Calu3 (cell line): ENCODE measurements at regions of chr5 and their contacts with region 1.

Region 1: DNA sequence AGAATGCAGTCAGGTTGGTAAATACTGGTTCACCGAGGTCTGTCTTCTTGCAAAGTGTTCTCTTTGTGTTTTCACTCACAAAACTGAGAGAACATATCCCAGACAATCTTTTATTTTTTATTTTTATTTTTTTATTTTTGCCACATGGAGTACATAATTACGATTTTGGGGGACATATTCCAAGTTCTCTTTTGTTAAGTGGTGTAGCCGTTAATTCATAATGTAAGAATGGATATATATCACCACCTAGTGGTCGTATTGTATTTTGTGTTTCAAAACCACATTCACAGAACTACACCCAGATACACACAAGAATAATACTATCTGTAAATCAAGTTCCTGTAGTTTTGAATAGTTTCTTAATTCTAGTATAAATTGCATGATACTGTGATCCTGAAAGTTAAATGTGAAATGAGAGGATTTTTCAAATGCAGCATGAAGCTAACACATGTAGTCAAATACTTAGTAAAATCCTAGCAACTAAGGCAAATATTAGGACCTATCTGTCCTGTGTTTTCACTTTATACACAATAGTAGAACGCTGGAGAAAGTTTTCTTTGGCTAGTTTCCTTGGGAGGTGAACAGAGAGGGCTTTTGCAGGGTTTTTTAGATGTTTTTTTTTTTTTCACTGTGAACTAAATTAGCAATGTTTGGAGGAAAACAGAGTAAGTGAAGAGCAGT is 92.7 kb downstream of the VCAN start:
- DNase-seq: no peak
- H3K4me3 Mint-ChIP-seq: peak overlapping the region; percentile 33
- H3K27ac Mint-ChIP-seq: peak overlapping the region; percentile 84
- H3K4me1 Mint-ChIP-seq: peaks cover 70% of the 10 kb centered on the region
- H3K27me3 Mint-ChIP-seq: no peaks in the 10 kb centered on the region
- CTCF ChIP-seq: peak; percentile 44

Region 2: GRCh38 chr5:82351754-82352145 is 1212.5 kb before region 1 on chr5:
- CTCF ChIA-PET with region 1: no interaction called
- intact Hi-C with region 1: loop called (anchors 5 kb)
- DNase-seq: peak; percentile 29
- H3K4me3 Mint-ChIP-seq: no peak overlapping the region
- H3K27ac Mint-ChIP-seq: peak overlapping the region; percentile 8
- H3K4me1 Mint-ChIP-seq: peaks cover 22% of the 10 kb centered on the region
- H3K27me3 Mint-ChIP-seq: no peaks in the 10 kb centered on the region
- CTCF ChIP-seq: peak; percentile 54

Region 3: DNA sequence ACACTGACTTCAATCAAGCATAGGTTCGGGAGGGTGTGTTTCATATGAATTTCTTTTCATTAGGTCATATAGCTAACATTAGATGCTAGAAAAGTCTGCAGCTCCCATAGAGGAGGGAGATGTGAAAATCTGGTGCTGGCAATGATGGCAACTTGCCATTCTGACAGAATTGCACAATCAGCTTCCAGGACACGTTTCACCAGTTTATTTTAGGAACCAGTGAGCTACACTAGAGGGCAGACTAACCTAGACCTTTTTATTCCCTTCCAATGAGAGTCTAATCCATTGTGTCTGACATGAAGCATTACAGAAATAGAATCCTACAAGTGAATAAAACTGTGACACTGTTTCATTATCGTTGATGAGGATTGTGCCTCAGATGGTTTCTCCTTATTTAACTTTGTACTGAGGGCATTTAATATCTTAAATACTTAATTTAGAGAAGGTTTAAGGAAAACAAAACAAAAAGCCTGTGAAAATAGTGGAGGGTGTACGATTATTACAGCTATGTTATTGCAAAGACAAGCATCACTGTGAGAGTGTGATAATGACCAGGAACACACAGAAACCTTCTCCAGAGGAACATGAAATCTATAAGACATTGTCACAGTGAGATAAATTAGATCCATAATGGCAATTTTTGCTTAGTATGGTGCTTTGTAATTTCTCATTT is 922.7 kb before region 1 on chr5:
- CTCF ChIA-PET with region 1: no interaction called
- intact Hi-C with region 1: loop called (anchors 1 kb)
- DNase-seq: peak; percentile 79
- H3K4me3 Mint-ChIP-seq: no peak overlapping the region
- H3K27ac Mint-ChIP-seq: peak overlapping the region; percentile 76
- H3K4me1 Mint-ChIP-seq: peaks cover 39% of the 10 kb centered on the region
- H3K27me3 Mint-ChIP-seq: no peaks in the 10 kb centered on the region
- CTCF ChIP-seq: peak; percentile 47

Region 4: DNA sequence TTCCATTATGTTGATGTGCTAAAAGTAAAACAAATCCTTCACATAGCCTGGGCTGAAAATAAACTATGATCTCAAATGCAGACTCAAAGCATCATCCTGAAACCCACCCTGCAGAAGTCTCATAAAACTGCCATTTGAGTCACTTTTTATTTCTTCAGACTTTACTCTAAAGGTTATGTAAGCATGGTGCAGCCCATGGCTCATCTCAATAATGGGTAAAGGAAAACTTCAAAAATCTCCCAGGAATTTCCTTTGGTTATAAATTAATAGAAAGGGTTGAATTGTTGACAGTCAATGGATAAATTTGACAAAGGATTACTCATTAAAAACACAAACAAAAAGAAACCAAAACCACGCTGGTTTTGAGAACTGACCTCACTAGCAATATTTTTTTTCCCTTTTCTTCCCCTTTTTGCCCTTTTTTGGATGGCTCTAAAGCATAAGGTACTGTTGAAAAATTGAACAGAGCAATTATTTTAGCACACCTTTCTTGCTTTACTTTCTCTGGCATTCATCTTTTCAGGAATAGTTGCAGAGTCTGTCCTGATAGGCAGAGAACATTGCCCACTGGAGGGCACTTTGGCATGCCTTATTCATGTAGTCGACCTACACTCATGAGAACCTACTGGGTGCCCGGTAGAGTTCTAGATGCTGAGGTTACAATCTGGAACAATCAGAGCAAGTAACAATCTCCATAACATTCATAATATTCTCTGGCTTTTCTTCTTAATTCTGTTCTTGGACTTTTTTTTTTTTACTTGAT is 678.4 kb before region 1 on chr5:
- CTCF ChIA-PET with region 1: no interaction called
- intact Hi-C with region 1: loop called (anchors 5 kb)
- DNase-seq: peak; percentile 46
- H3K4me3 Mint-ChIP-seq: peak overlapping the region; percentile 47
- H3K27ac Mint-ChIP-seq: peak overlapping the region; percentile 18
- H3K4me1 Mint-ChIP-seq: peaks cover 29% of the 10 kb centered on the region
- H3K27me3 Mint-ChIP-seq: no peaks in the 10 kb centered on the region
- CTCF ChIP-seq: no peak

Region 5: GRCh38 chr5:83277953-83278352 is 286.3 kb before region 1 on chr5:
- CTCF ChIA-PET with region 1: no interaction called
- intact Hi-C with region 1: loop called (anchors 10 kb)
- DNase-seq: no peak
- H3K4me3 Mint-ChIP-seq: no peak overlapping the region
- H3K27ac Mint-ChIP-seq: no peak overlapping the region
- H3K4me1 Mint-ChIP-seq: peaks cover 16% of the 10 kb centered on the region
- H3K27me3 Mint-ChIP-seq: no peaks in the 10 kb centered on the region
- CTCF ChIP-seq: no peak

Region 6: GRCh38 chr5:83473346-83474163 is 90.7 kb before region 1 on chr5:
- CTCF ChIA-PET with region 1: interaction called, 7 read pairs
- intact Hi-C with region 1: loop called (anchors 2 kb)
- DNase-seq: peak; percentile 94
- H3K4me3 Mint-ChIP-seq: peak overlapping the region; percentile 77
- H3K27ac Mint-ChIP-seq: peak overlapping the region; percentile 84
- H3K4me1 Mint-ChIP-seq: peaks cover 49% of the 10 kb centered on the region
- H3K27me3 Mint-ChIP-seq: peaks cover 13% of the 10 kb centered on the region
- CTCF ChIP-seq: peak; percentile 97

Region 7: GRCh38 chr5:83553000-83553486 is 11.2 kb before region 1 on chr5:
- CTCF ChIA-PET with region 1: no interaction called
- intact Hi-C with region 1: no loop called
- DNase-seq: no peak
- H3K4me3 Mint-ChIP-seq: no peak overlapping the region
- H3K27ac Mint-ChIP-seq: no peak overlapping the region
- H3K4me1 Mint-ChIP-seq: peaks cover 44% of the 10 kb centered on the region
- H3K27me3 Mint-ChIP-seq: no peaks in the 10 kb centered on the region
- CTCF ChIP-seq: no peak

Region 8: DNA sequence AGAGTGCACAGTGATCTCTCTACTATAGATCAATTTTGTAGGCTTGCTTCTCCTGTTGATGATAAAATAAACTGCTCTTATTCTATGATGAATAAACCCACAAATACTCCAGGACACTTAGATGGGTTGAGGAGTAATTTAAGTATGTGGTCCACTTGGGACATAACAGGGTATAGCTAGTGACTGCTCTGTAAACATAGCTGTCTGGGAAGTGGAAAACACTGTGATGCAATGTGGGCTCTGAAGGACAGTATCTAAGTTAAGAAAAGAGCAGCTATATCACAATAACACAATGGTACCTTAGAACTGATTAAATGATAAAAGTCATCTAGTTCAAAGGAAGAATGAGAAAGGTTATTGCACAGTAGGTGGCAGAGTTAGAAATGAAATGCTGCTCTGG is 450.8 kb after region 1 on chr5:
- CTCF ChIA-PET with region 1: no interaction called
- intact Hi-C with region 1: no loop called
- DNase-seq: no peak
- H3K4me3 Mint-ChIP-seq: no peak overlapping the region
- H3K27ac Mint-ChIP-seq: no peak overlapping the region
- H3K4me1 Mint-ChIP-seq: peaks cover 12% of the 10 kb centered on the region
- H3K27me3 Mint-ChIP-seq: no peaks in the 10 kb centered on the region
- CTCF ChIP-seq: no peak